PC-9 (cell line): ENCODE measurements at regions of chr6 and their contacts with region 1.

Region 1: DNA sequence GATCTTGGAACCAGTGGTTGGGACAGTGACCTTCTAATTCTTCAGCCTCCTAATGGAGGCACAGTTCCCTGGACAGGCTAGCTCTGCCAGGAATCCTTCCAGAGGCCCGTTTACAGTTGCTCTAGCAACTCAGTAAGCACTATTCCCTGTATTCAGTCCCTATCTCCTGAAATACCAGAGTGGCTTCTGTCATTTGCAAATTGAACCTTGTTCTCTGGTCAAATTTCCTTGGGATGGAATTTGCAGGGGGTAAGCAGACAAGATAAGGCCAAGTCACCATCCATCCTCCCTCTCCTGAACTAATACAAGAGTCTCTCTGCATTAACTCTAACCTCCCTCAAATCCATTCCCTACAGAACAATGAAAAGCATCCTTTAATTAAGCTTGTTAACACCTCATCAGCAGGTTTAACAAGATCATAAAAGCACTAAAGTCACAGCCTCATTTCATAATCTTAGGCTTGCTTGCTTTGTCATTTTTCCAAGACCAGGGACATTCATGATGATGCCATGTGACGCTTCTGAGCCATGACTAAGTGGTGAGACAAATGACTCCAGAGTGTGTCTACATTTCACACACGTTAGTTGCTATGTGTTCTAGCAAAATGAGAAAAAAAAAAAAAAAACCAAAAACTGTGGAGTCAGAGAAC is 37.1 kb downstream of the SLC22A23 start:
- DNase-seq: peak in 1 of 2 experiments; percentile 78
- H3K4me3 ChIP-seq: no peak overlapping the region
- H3K27ac ChIP-seq: peak overlapping the region; percentile 76
- H3K4me1 ChIP-seq: peaks cover 59% of the 10 kb centered on the region
- H3K27me3 ChIP-seq: no peaks in the 10 kb centered on the region
- CTCF ChIP-seq: no peak

Region 2: GRCh38 chr6:3390698-3391097 is 29.1 kb before region 1 on chr6:
- CTCF ChIA-PET with region 1: interaction called, 6 read pairs
- POLR2A ChIA-PET with region 1: no interaction called
- intact Hi-C with region 1: loop called (anchors 2 kb)
- DNase-seq: peak; percentile 70 to 82
- H3K4me3 ChIP-seq: no peak overlapping the region
- H3K27ac ChIP-seq: peak overlapping the region; percentile 50; the same call in 1 of the 2 replicates
- H3K4me1 ChIP-seq: no peaks in the 10 kb centered on the region
- H3K27me3 ChIP-seq: no peaks in the 10 kb centered on the region
- CTCF ChIP-seq: no peak

Region 3: DNA sequence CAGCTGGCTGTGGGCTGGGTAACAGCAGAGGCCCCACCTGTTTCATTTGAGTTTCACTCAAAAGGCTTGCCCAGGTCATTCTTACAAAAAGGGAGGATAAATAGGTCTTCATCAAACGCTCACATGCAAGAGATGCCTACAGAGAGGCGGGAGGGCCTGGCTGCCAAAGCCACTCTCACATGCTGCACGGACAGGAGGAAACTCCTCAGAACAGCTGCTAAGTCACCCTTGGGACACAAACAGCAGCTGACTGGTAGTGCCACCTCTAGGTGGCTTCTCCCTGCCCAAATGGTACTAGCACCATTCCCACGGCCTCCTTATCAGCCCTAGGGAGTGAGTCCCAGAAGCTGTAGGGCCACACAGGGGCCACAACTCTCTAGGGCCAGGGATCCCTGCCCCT is 13.3 kb after region 1 on chr6:
- CTCF ChIA-PET with region 1: interaction called, 18 read pairs
- POLR2A ChIA-PET with region 1: interaction called, 7 read pairs
- intact Hi-C with region 1: loop called (anchors 2 kb)
- DNase-seq: peak in 1 of 2 experiments; percentile 17
- H3K4me3 ChIP-seq: no peak overlapping the region
- H3K27ac ChIP-seq: no peak overlapping the region
- H3K4me1 ChIP-seq: no peaks in the 10 kb centered on the region
- H3K27me3 ChIP-seq: no peaks in the 10 kb centered on the region
- CTCF ChIP-seq: no peak

Region 4: DNA sequence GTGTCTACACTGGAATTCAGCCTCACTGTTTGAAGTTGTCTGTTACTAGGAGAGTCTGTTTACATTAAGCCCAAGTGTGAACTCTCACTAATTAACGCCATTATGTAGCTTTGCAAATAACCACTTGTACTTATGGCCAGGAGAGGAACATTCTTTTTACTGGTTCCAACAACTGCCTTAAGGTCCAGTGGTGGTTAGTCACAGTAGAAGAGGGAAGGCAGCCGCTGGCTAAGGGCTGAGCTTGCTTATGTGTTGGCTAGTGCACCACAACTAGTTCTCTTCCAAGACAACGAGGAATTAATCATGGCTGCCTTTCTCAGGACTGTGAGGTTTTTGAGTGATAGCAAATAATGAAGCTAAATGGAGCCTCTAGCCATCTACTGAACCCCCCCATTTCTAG is 52.0 kb after region 1 on chr6:
- CTCF ChIA-PET with region 1: no interaction called
- POLR2A ChIA-PET with region 1: no interaction called
- intact Hi-C with region 1: no loop called
- DNase-seq: no peak
- H3K4me3 ChIP-seq: no peak overlapping the region
- H3K27ac ChIP-seq: no peak overlapping the region
- H3K4me1 ChIP-seq: peaks cover 6% of the 10 kb centered on the region
- H3K27me3 ChIP-seq: no peaks in the 10 kb centered on the region
- CTCF ChIP-seq: no peak

Region 5: GRCh38 chr6:3489027-3489757 is 69.4 kb after region 1 on chr6:
- CTCF ChIA-PET with region 1: no interaction called
- POLR2A ChIA-PET with region 1: no interaction called
- intact Hi-C with region 1: no loop called
- DNase-seq: peak in 1 of 2 experiments; percentile 47
- H3K4me3 ChIP-seq: no peak overlapping the region
- H3K27ac ChIP-seq: no peak overlapping the region
- H3K4me1 ChIP-seq: no peaks in the 10 kb centered on the region
- H3K27me3 ChIP-seq: peaks cover 5% of the 10 kb centered on the region; the same call in 1 of the 2 replicates
- CTCF ChIP-seq: no peak